H1 (cell line): ENCODE measurements at regions of chr4 and their contacts with region 1.

Region 1: DNA sequence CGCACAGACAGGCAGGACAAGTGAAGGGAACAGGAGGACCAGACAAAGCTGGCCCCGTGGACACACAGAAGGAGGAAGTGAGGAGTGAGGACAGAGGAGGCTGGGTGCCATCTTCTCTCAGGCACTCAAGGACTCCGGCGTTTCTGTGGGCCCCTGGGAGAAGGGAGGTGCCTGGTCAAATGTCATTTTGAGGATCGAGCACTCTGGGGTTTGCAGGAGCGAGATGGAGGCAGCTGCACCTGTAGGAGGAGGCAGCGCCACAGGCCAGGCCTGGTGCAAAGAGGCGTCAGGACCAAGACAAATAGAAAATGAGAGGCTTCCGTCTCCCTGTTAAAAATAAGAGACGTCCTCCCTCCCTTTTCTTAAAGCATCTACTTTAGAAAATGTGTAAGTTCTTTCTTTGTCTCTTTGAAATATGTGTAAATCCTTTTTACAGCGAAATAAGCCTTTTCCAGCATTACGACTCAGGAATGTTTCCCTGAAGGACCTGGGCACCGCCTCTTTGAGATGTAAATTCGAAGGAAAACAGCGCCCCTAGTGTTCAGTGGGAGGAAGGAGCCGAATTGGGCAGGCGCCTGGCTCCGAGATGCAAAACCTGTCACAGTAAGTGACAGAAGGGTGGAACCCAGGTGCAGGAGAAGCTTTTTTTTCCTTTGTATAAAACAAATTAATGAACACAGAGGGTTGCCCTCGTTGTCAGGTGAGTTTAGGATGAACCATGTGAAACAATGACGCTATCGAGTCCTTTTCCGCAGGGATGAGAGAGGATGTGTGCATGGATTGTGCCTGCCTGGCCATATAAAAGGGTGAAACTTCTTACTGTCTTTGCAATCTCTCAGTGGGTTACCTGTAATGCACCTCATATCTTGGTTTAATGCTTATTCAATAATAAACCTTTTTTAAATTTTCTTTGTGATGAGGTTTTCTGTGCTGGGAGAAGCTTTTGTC is 1.4 kb upstream of the C4orf50 start:
- DNase-seq: peak in 1 of 2 experiments; percentile 79
- H3K4me3 ChIP-seq: peak overlapping the region in 1 of 4 experiments; percentile 16; a peak in 1 of 8 replicates
- H3K27ac ChIP-seq: no peak overlapping the region
- H3K4me1 ChIP-seq: peaks cover 0 to 8% (median 5%) of the 10 kb centered on the region in 4 experiments; a peak in 6 of 7 replicates
- H3K27me3 ChIP-seq: no peaks in the 10 kb centered on the region
- CTCF ChIP-seq: peak in 2 of 3 experiments; percentile 79 to 87; a peak in 3 of 4 replicates
- EP300 ChIP-seq: no peak
- POLR2A ChIP-seq: no peak
- RAD21 ChIP-seq: peak; percentile 27 to 40; a peak in 3 of 4 replicates

Region 2: GRCh38 chr4:5710961-5711478 is 308.6 kb before region 1 on chr4 and contains the start of gene EVC:
- CTCF ChIA-PET with region 1: no interaction called
- POLR2A ChIA-PET with region 1: no interaction called
- DNase-seq: peak in 1 of 2 experiments; percentile 85
- H3K4me3 ChIP-seq: peak within 1 kb of the TSS; percentile 40 to 68 (median 52)
- H3K27ac ChIP-seq: no peak within 1 kb of the TSS
- H3K4me1 ChIP-seq: peaks cover 3 to 19% (median 11%) of the 10 kb centered on the region in 4 experiments
- H3K27me3 ChIP-seq: peaks cover 0 to 19% (median 15%) of the 10 kb centered on the region in 4 experiments; a peak in 4 of 7 replicates
- CTCF ChIP-seq: no peak
- EP300 ChIP-seq: no peak
- POLR2A ChIP-seq: peak in 1 of 2 experiments; percentile 47; a peak in 1 of 3 replicates
- RAD21 ChIP-seq: no peak
- total RNA-seq, gene EVC: 9.8 and 11.3 TPM in 2 replicates

Region 3: DNA sequence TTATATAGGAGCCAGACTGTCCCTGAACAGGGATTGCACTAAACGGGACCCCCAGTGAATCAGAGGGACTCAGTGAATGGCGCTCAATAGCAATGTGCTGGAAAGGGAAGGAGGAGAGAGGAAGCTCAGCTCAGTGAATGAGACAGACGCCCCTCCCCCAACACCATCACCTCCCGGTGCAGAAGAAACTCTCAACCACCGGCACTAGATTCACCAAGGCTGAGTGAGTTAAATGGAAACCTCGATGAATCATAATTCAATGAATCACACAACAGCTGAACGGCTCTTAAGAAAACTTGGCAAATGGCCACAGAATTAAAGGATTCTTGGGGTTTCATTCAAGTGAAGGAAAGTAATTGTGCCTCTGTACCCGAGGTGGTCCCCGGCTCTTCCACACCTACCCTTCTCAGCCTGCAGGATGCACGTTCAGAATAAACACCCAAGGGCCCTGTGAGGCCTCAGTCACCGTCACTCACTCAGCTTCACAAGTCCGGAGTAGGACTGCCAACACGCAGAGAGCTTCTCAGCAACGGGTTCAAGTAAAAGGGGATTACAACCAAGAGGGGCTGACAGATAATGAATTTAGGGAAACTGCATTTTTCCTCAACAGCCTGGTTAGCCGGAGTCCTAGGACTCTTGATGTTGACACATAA is 156.0 kb before region 1 on chr4:
- CTCF ChIA-PET with region 1: no interaction called
- POLR2A ChIA-PET with region 1: no interaction called
- DNase-seq: no peak
- H3K4me3 ChIP-seq: no peak overlapping the region
- H3K27ac ChIP-seq: no peak overlapping the region
- H3K4me1 ChIP-seq: peaks cover 0 to 9% (median 3%) of the 10 kb centered on the region in 4 experiments; a peak in 3 of 7 replicates
- H3K27me3 ChIP-seq: no peaks in the 10 kb centered on the region
- CTCF ChIP-seq: no peak
- EP300 ChIP-seq: no peak
- POLR2A ChIP-seq: no peak
- RAD21 ChIP-seq: no peak

Region 4: DNA sequence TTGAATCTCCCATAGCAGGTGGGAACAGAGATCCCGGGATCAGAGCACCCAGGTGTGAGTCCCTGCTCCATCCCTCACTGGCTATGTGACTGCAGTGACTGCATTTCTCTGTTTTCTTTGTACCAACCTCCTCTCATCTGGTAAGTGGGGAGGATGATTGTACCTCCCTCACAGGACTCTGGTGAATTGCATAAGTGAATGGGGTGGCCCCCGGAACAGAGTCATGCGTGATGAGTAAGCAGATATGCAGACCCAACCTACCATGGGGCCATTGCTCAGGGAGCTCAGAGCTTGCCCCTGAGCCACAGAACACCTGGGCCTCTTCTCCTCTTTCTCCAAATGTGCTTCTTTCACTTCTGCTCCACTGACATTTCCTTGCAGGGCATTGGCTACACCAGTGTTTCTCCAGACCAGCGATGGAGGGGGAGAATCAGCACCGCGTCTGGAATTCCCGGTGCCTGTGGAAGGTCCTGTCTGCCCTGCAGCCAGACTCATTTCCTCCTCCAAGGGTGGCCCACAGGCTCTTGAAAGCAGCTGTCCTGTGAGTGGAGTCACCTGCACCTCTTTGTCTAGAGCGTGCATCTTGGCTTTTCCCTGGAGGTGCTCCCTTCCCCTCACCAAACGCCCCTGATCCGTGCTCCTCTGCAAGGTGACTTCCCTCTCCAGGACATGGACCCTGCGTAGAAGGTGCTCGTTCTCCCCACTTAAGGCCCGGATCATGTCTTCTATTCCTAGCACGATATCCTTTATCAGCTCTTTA is 31.3 kb before region 1 on chr4:
- CTCF ChIA-PET with region 1: interaction called, 10 read pairs
- POLR2A ChIA-PET with region 1: no interaction called
- DNase-seq: no peak
- H3K4me3 ChIP-seq: no peak overlapping the region
- H3K27ac ChIP-seq: no peak overlapping the region
- H3K4me1 ChIP-seq: no peaks in the 10 kb centered on the region; a peak in 2 of 7 replicates
- H3K27me3 ChIP-seq: no peaks in the 10 kb centered on the region; a peak in 1 of 7 replicates
- CTCF ChIP-seq: no peak
- EP300 ChIP-seq: no peak
- POLR2A ChIP-seq: no peak
- RAD21 ChIP-seq: no peak

Region 5: DNA sequence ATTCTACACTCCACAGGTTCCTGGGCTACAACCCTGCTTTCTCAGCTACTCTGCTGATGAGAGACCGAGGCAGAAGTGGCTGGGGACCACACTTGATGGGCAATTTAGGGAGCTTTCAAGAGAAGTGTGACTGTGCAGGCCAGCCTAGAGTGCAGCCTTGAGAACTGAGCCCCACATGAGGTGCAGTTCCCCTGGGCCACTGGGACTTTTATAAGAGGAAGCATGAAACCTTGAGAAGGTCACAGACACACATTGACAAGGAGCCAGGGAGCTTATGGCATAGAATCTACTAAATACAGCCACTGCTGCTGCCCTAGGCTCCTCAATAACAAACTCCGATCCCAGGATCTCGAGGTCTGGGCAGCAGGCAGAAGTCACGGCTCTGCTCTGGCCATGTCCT is 14.4 kb before region 1 on chr4:
- CTCF ChIA-PET with region 1: interaction called, 74 read pairs
- POLR2A ChIA-PET with region 1: interaction called, 3 read pairs
- DNase-seq: no peak
- H3K4me3 ChIP-seq: no peak overlapping the region
- H3K27ac ChIP-seq: no peak overlapping the region
- H3K4me1 ChIP-seq: no peaks in the 10 kb centered on the region
- H3K27me3 ChIP-seq: peaks cover 0 to 22% (median 17%) of the 10 kb centered on the region in 4 experiments; a peak in 6 of 7 replicates
- CTCF ChIP-seq: no peak
- EP300 ChIP-seq: no peak
- POLR2A ChIP-seq: no peak
- RAD21 ChIP-seq: no peak

Region 6: DNA sequence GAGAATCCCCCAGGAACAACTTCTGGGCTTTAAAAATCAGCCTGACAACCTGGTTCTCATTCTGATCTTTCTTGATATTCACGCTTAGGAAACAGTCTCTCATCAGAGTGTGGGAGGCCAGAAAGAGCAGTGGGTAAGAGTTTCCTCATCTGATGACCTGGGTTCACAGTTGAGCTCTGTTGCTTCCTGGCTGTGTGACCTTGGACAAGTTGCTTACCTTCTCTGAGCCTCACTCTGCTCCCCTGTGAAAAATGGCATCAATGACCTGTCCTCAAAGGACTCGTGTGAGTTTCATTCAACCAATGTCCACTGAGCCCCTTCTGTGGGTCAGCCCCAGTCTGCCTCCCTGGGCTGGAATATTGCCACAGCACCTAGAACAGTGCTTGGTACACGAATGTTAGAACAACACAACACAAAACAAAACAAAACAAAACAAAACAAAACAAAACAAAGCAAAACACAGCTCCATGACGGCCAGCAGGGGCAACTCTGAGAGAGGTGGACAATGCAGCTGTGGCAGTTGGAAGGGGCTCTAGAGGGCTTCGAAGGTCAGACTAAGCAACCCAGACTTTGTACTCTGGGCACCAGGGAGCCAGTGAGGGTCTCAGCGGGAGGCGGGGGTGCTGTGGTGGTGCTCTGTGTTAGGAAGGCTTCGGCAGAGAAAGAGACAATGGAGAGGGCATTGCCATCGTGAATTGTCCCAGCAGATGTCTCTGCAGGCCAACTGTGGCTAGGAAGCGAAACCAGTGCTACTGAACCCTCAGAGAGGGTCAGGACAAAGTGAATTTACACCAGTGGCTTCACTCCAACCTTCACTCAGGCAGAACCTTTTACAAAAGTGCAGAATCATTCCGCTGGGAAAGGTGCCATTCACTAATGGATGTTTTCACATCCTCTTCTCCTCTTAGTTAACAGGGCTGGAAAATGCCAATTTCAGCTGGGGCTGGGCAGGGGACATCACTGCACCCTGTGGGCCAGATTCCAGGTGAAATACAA is 13.0 kb after region 1 on chr4:
- CTCF ChIA-PET with region 1: interaction called, 64 read pairs
- POLR2A ChIA-PET with region 1: no interaction called
- DNase-seq: no peak
- H3K4me3 ChIP-seq: no peak overlapping the region
- H3K27ac ChIP-seq: no peak overlapping the region
- H3K4me1 ChIP-seq: peaks cover 0 to 9% (median 3%) of the 10 kb centered on the region in 4 experiments; a peak in 5 of 7 replicates
- H3K27me3 ChIP-seq: no peaks in the 10 kb centered on the region; a peak in 1 of 7 replicates
- CTCF ChIP-seq: peak in 1 of 3 experiments; percentile 26; a peak in 1 of 4 replicates
- EP300 ChIP-seq: no peak
- POLR2A ChIP-seq: no peak
- RAD21 ChIP-seq: peak; percentile 29 to 43; a peak in 3 of 4 replicates

Region 7: GRCh38 chr4:6087673-6088341 is 68.2 kb after region 1 on chr4:
- CTCF ChIA-PET with region 1: interaction called, 13 read pairs
- POLR2A ChIA-PET with region 1: no interaction called
- DNase-seq: peak; percentile 59 to 75
- H3K4me3 ChIP-seq: no peak overlapping the region
- H3K27ac ChIP-seq: no peak overlapping the region
- H3K4me1 ChIP-seq: peaks cover 0 to 8% (median 4%) of the 10 kb centered on the region in 4 experiments; a peak in 4 of 7 replicates
- H3K27me3 ChIP-seq: 0 out of 7 replicates have a peak, but pooled peaks cover 0 to 3% (median 0%) of the 10 kb centered on the region in 4 experiments
- CTCF ChIP-seq: peak; percentile 86 to 88 (median 88)
- EP300 ChIP-seq: no peak
- POLR2A ChIP-seq: no peak
- RAD21 ChIP-seq: peak; percentile 82 to 87